PC-3 (cell line): ENCODE measurements at regions of chr17 and their contacts with region 1.

Region 1: DNA sequence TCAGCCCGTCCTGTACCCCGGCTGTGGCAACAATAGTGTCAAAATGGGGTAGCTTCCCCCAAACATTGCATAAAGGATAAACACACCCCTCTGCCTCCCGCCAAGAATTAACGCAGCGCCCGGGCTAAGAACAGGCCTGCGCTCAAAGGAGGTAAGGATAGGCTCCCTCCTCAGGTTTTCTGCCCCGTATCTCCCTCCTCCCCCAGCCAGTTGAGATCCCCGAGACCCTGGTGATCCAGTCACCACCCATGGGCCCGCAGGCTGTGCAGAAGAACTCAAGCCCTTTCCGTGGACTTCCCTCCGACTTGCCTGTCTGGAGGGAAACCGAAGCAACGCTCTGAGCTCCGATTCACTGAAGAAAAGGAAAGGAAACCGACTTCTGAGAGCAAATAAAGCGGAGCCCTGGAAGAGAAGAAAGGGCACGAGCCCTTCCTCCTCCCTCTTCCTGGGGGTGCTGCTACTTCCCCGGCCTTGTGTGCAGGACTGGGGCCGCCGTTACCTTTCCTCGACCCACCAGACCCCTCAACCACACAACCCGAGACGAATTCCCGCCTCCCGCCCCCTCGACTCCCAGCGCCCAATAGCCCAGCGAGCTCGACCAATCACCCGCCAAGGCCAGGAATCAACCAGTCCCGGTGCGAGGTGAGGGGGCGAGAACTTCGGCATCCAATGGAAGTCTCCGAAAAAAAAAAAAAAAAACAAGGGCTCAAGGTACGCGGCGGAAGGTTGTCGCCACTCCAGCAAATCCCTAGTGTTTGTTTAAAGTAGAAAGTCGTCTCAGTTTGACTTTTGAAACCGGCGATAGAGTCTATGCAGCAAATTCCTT is at the start of gene BRIP1:
- DNase-seq: peak; percentile 98
- ATAC-seq: peak; percentile 91
- H3K4me3 ChIP-seq: peak within 1 kb of the TSS; percentile 79
- H3K27ac ChIP-seq: peak within 1 kb of the TSS; percentile 51
- H3K4me1 ChIP-seq: peaks cover 34% of the 10 kb centered on the region
- H3K27me3 ChIP-seq: no peaks in the 10 kb centered on the region
- CTCF ChIP-seq: no peak
- total RNA-seq, gene BRIP1: 13.8 and 21.1 TPM in 2 replicates

Region 2: DNA sequence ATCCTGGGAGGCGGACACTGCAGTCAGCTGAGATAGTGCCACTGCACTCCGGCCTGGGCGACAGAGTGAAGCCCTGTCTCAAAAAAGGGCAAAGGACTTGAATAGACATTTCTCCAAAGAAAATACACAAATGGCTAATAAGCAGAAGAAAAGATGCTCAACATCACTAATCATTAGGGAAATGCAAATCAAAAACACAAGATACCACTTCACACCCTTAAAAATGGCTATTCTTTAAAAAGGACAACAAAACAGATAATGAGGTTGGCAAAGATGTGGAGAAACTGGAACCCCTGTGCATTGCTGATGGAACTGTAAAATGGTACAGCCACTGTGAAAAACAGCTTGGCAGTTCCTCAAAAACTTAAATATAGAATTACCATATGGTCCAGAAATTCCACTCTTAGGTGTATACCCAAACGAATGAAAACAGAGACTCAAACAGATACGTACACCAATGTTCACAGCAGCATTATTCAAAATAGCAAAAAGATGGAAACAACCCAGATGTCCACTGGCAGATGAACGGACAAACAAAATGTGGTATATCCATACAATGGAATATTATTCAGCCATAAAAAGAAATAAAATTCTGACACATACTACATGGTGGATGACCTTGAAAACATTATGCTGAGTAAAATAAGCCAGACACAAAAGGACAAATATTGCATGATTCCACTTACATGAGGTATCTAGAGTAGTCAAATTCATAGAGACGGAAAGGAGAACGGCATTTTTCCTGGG is 35.4 kb before region 1 on chr17:
- CTCF ChIA-PET with region 1: no interaction called
- POLR2A ChIA-PET with region 1: interaction called, 15 read pairs
- intact Hi-C with region 1: no loop called
- DNase-seq: no peak
- ATAC-seq: no peak
- H3K4me3 ChIP-seq: no peak overlapping the region
- H3K27ac ChIP-seq: no peak overlapping the region
- H3K4me1 ChIP-seq: no peaks in the 10 kb centered on the region
- H3K27me3 ChIP-seq: no peaks in the 10 kb centered on the region
- CTCF ChIP-seq: no peak

Region 3: GRCh38 chr17:61849674-61850073 is 13.5 kb before region 1 on chr17:
- CTCF ChIA-PET with region 1: no interaction called
- POLR2A ChIA-PET with region 1: interaction called, 12 read pairs
- intact Hi-C with region 1: no loop called
- DNase-seq: no peak
- ATAC-seq: no peak
- H3K4me3 ChIP-seq: no peak overlapping the region
- H3K27ac ChIP-seq: no peak overlapping the region
- H3K4me1 ChIP-seq: no peaks in the 10 kb centered on the region
- H3K27me3 ChIP-seq: no peaks in the 10 kb centered on the region
- CTCF ChIP-seq: no peak

Region 4: GRCh38 chr17:61927200-61928165 is 64.3 kb after region 1 on chr17 and contains the start of gene INTS2:
- CTCF ChIA-PET with region 1: no interaction called
- POLR2A ChIA-PET with region 1: no interaction called
- intact Hi-C with region 1: loop called (anchors 5 kb)
- DNase-seq: peak; percentile 97
- ATAC-seq: peak; percentile 86
- H3K4me3 ChIP-seq: peak within 1 kb of the TSS; percentile 88
- H3K27ac ChIP-seq: peak within 1 kb of the TSS; percentile 68
- H3K4me1 ChIP-seq: peaks cover 16% of the 10 kb centered on the region
- H3K27me3 ChIP-seq: no peaks in the 10 kb centered on the region
- CTCF ChIP-seq: no peak
- total RNA-seq, gene INTS2: 16.3 and 18.1 TPM in 2 replicates

Region 5: DNA sequence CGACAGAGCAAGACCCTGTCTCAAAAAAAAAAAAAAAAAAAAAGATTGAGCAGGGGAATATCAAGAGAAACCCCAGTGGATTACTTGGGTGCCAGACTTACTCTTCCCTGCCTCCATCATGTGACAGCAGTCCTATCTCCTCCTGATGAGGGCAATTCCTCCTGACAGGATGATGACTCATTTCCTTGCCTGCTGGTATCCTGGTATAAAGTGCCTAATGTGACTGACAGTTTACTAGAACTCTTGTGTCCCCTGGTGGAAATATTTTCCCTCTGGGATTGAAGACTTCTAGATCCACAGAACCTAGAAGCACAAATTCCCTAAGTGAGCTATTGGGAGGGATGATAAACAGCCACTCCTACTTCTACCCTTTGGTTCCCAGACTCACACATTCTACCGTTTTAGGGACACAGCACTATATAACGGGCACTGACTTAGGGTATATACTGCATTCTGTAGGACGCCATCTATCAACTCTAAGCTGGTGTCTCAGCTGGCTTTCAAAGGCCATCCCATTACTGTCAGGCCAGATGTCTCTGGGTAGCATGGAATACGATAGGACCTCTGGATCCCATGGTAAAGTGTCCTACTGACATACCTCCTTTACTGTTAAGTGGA is 316.5 kb after region 1 on chr17:
- CTCF ChIA-PET with region 1: no interaction called
- POLR2A ChIA-PET with region 1: no interaction called
- intact Hi-C with region 1: loop called (anchors 5 kb)
- DNase-seq: peak; percentile 95
- ATAC-seq: peak; percentile 99
- H3K4me3 ChIP-seq: no peak overlapping the region
- H3K27ac ChIP-seq: peak overlapping the region; percentile 31
- H3K4me1 ChIP-seq: peaks cover 19% of the 10 kb centered on the region
- H3K27me3 ChIP-seq: no peaks in the 10 kb centered on the region
- CTCF ChIP-seq: peak; percentile 86